ENCODE measurements at regions of chr6 and their contacts with region 1.

Region 1: GRCh38 chr6:33014841-33015634 is 5.6 kb upstream of the HLA-DOA start:
- DNase-seq: peak; percentile 70
- ATAC-seq: peak; percentile 77
- H3K4me3 Mint-ChIP-seq: no peak overlapping the region
- H3K27ac Mint-ChIP-seq: no peak overlapping the region
- H3K4me1 Mint-ChIP-seq: peaks cover 26% of the 10 kb centered on the region
- H3K27me3 Mint-ChIP-seq: peaks cover 32% of the 10 kb centered on the region

Region 2: DNA sequence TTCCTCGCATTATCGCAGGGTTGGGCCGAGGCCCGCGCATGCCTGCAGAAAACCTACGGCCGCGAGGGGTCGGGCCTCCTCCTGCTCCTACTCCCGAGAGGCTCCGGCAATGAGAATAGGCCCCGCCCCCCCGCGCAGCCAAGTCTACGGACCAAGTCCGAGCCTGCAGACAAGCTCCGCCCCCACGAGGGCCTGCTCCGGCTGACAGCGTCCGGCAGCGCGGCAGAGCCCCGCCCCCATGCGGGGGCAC is 819.5 kb before region 1 on chr6:
- CTCF ChIA-PET with region 1: no interaction called
- DNase-seq: peak; percentile 100
- ATAC-seq: peak; percentile 87
- H3K4me3 Mint-ChIP-seq: peak overlapping the region; percentile 95
- H3K27ac Mint-ChIP-seq: peak overlapping the region; percentile 99
- H3K4me1 Mint-ChIP-seq: peaks cover 26% of the 10 kb centered on the region
- H3K27me3 Mint-ChIP-seq: no peaks in the 10 kb centered on the region

Region 3: GRCh38 chr6:32906539-32906938 is 108.5 kb before region 1 on chr6:
- CTCF ChIA-PET with region 1: no interaction called
- DNase-seq: no peak
- ATAC-seq: no peak
- H3K4me3 Mint-ChIP-seq: no peak overlapping the region
- H3K27ac Mint-ChIP-seq: no peak overlapping the region
- H3K4me1 Mint-ChIP-seq: no peaks in the 10 kb centered on the region
- H3K27me3 Mint-ChIP-seq: peaks cover 4% of the 10 kb centered on the region

Region 4: DNA sequence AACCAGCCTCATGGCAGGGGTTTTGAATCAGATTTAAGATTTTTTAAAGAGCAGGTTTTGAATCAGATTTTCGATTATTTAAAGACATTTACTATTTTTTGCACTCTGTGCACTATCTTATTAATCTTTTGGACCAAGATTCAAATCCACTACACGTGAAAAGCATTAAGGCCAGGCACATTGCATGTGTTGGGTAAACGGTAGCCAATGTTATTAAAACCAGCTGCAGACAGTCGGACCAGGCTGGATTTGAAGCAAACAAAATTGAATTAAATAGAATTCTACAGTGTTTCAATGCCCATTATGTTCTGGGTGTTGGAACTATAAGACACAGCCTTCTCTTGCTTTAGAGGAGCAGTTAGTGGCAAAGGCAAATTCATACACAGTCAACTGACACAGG is 13.4 kb before region 1 on chr6:
- CTCF ChIA-PET with region 1: interaction called, 10 read pairs
- DNase-seq: no peak
- ATAC-seq: no peak
- H3K4me3 Mint-ChIP-seq: no peak overlapping the region
- H3K27ac Mint-ChIP-seq: no peak overlapping the region
- H3K4me1 Mint-ChIP-seq: peaks cover 8% of the 10 kb centered on the region
- H3K27me3 Mint-ChIP-seq: peaks cover 28% of the 10 kb centered on the region

Region 5: DNA sequence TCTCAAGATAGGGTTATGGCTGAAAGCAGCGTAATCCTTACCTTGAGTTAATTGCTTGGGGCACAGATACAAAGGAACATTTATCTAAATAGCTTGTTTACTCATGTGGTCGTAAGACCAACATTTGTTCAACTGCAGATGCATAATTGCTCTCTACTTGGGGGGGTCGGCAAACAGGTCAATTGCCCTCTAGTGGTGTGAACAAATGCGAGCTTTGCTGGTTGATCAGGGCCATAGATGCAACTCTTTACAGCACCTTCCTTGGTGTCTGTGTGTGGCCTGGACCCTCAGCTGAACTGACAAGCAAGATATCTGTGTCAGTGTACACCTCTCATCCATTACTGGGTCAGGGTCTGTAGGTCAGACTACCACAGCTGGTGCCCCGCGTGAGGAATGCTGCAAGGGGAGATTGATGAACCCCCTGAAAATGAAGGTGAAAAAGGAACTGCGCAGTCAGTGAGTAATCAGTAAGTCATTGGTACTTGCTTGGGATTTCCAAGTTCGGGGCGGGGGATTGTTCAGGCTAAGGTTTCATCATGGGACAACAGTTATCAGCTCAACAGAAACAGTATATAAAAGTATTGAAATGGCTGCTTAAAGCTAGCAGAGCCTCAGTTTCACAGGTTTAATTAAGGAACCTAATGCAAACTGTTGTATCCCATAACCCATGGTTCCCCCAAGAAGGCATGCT is 34.4 kb after region 1 on chr6:
- CTCF ChIA-PET with region 1: interaction called, 19 read pairs
- DNase-seq: no peak
- ATAC-seq: peak; percentile 33
- H3K4me3 Mint-ChIP-seq: no peak overlapping the region
- H3K27ac Mint-ChIP-seq: no peak overlapping the region
- H3K4me1 Mint-ChIP-seq: no peaks in the 10 kb centered on the region
- H3K27me3 Mint-ChIP-seq: peaks cover 84% of the 10 kb centered on the region

Region 6: DNA sequence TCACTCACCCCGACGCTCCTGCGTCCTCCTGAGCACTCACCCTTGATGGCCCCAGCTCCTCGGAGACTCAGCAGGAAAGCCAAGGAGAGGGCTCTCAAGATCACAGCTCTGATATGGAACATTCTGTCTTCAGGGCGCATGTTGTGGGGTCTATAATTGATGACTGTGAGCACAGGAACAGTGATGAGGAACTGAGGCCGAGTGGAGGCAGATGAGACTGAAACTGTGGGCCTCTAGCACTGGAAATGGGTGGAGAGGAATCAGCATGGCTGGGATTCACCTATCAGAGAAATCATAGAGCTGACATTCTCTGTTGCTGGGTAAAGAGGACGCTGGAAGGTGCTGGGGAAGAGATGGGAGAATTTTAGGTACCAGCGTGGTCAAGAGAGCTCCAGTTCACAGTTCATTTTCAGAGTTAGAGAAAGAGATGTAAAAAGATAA is 58.4 kb after region 1 on chr6 and contains the start of gene HLA-DPA1:
- CTCF ChIA-PET with region 1: interaction called, 21 read pairs
- DNase-seq: peak; percentile 81
- ATAC-seq: peak; percentile 80
- H3K4me3 Mint-ChIP-seq: peak within 1 kb of the TSS; percentile 92
- H3K27ac Mint-ChIP-seq: peak within 1 kb of the TSS; percentile 84
- H3K4me1 Mint-ChIP-seq: peaks cover 65% of the 10 kb centered on the region
- H3K27me3 Mint-ChIP-seq: no peaks in the 10 kb centered on the region
- total RNA-seq, gene HLA-DPA1: 276 to 299 TPM

Region 7: GRCh38 chr6:33082702-33083101 is 67.7 kb after region 1 on chr6:
- CTCF ChIA-PET with region 1: interaction called, 14 read pairs
- DNase-seq: no peak
- ATAC-seq: no peak
- H3K4me3 Mint-ChIP-seq: no peak overlapping the region
- H3K27ac Mint-ChIP-seq: peak overlapping the region; percentile 8
- H3K4me1 Mint-ChIP-seq: peaks cover 34% of the 10 kb centered on the region
- H3K27me3 Mint-ChIP-seq: no peaks in the 10 kb centered on the region

Region 8: DNA sequence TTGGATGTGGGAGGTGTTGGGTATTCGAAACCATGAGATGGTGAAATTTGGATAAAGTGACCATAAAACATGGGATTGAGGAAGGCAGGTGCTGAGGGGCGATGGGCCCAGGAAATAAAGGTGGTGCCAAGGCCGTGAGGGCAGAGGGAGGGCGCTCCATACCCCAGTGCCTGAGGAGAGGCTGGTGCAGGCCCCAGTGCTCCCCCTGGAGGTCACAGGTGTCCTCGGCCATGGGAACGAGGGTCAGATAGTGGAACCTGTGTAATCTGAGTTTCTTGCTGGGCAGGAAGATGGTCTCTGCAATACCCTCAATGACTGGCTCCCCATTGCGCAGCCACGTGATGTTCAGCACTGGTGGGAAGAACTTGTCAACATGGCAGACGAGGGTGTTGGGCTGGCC is 76.9 kb after region 1 on chr6:
- CTCF ChIA-PET with region 1: interaction called, 12 read pairs
- DNase-seq: peak; percentile 80
- ATAC-seq: peak; percentile 95
- H3K4me3 Mint-ChIP-seq: no peak overlapping the region
- H3K27ac Mint-ChIP-seq: no peak overlapping the region
- H3K4me1 Mint-ChIP-seq: peaks cover 5% of the 10 kb centered on the region
- H3K27me3 Mint-ChIP-seq: peaks cover 19% of the 10 kb centered on the region